ENCODE measurements at regions of chr20 and their contacts with region 1.

Region 1: DNA sequence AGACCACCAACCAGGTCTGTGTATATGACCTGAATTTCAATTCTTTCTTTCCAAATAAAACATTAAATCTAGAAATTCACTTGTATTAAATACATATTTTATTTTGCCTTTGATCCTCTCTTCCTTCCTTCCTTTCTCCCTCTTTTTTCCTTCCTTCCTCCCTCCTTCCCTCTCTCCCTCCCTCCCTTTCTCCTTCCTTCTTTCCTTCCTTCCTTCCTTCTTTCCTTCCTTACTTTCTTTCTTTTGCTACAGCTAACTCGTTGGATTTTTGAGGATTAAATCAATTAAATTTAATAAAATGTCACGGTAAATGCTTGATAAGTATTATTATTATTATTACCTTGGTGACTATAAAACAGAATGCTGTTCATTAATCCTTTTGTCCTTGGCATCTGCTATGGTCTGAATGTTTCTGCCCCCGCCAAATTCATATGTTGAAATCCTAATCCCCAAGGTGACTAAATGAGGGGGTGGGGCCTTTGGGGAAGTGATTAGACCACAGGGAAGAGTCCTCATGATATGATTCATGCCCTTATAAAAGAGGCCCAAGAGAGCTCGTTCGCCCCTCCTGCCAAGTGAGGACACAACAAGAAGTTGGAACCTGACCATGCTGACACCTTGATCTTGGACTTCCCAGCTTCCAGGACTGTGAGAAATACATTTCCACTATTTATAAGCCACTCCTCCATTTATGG is 67.6 kb upstream of the BTBD3 start:
- DNase-seq: peak; percentile 8
- ATAC-seq: peak; percentile 55; the same call in 1 of the 2 replicates
- H3K4me3 ChIP-seq: no peak overlapping the region
- H3K27ac ChIP-seq: no peak overlapping the region
- H3K4me1 ChIP-seq: peaks cover 2 to 22% of the 10 kb centered on the region in 2 experiments; a peak in 2 of 4 replicates
- H3K27me3 ChIP-seq: no peaks in the 10 kb centered on the region
- CTCF ChIP-seq: no peak
- POLR2A ChIP-seq: no peak
- RAD21 ChIP-seq: no peak

Region 2: GRCh38 chr20:11906626-11907480 is 56.7 kb after region 1 on chr20:
- CTCF ChIA-PET with region 1: no interaction called
- POLR2A ChIA-PET with region 1: no interaction called
- RAD21 ChIA-PET with region 1: no interaction called
- intact Hi-C with region 1: loop called (anchors 5 kb)
- DNase-seq: no peak
- ATAC-seq: no peak
- H3K4me3 ChIP-seq: no peak overlapping the region
- H3K27ac ChIP-seq: no peak overlapping the region
- H3K4me1 ChIP-seq: peaks cover 0 to 18% of the 10 kb centered on the region in 2 experiments; a peak in 1 of 4 replicates
- H3K27me3 ChIP-seq: no peaks in the 10 kb centered on the region
- CTCF ChIP-seq: no peak
- POLR2A ChIP-seq: no peak
- RAD21 ChIP-seq: no peak